ENCODE measurements at regions of chr17 and their contacts with region 1.

Region 1: DNA sequence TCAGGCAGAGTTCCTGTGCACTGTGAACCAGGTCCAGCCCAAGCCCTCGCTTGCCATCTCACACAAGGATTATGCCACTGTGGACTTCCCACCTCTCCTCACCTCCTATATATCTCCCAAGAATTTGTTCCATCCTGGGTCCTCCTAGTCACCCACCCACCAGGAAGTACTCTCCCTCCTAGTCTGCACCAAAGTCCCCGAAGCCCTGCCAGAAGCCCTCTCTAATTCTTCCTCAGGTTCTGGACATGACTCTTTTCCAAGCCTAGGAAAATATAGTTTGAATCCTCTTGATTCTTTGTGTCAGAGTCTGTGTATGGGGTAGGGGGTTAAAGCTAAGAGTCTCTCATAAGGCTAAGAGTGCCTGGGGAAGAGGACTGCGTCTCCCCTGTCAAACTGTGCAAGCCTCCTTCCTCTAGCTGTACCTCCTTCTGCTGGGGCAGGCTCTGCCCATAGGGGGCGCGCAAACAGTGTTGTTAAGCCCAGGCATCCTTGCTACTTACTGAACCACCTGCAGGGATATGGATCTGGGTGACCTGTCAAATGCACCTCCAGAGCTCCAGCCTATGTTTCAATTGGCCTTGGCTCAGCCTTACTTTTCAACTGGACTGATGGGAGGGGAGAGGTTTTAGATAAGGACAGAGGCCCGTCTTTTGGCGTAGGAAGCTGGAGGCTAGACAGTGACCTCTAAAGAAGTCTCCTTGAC is 16.6 kb upstream of the DLX4 start:
- DNase-seq: peak; percentile 92
- ATAC-seq: peak; percentile 97
- H3K4me3 Mint-ChIP-seq: no peak overlapping the region
- H3K27ac Mint-ChIP-seq: no peak overlapping the region
- H3K4me1 Mint-ChIP-seq: no peaks in the 10 kb centered on the region
- H3K27me3 Mint-ChIP-seq: peaks cover 33% of the 10 kb centered on the region

Region 2: DNA sequence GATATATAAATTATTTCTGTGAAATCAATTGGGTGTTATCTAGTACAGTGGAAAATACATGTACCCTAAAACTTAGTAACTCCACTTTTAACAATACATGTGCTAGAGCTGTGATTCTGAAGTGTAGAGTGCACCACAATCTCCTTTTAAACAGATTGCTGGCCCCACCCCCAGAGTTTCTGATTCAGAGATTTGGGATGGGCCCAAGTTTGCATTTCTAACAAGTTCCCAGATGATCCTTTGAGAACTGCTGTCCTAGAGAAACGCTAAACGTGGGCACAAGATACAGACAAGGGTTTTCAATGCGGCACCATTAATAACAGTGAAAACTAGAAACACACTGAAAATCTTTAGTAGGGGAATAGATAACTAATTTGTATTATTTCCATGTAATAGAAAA is 327.5 kb before region 1 on chr17:
- CTCF ChIA-PET with region 1: no interaction called
- POLR2A ChIA-PET with region 1: no interaction called
- intact Hi-C with region 1: no loop called
- DNase-seq: no peak
- ATAC-seq: no peak
- H3K4me3 Mint-ChIP-seq: no peak overlapping the region
- H3K27ac Mint-ChIP-seq: no peak overlapping the region
- H3K4me1 Mint-ChIP-seq: peaks cover 25% of the 10 kb centered on the region
- H3K27me3 Mint-ChIP-seq: no peaks in the 10 kb centered on the region

Region 3: GRCh38 chr17:49841557-49841956 is 110.8 kb before region 1 on chr17:
- CTCF ChIA-PET with region 1: no interaction called
- POLR2A ChIA-PET with region 1: no interaction called
- intact Hi-C with region 1: no loop called
- DNase-seq: no peak
- ATAC-seq: no peak
- H3K4me3 Mint-ChIP-seq: no peak overlapping the region
- H3K27ac Mint-ChIP-seq: no peak overlapping the region
- H3K4me1 Mint-ChIP-seq: peaks cover 11% of the 10 kb centered on the region
- H3K27me3 Mint-ChIP-seq: no peaks in the 10 kb centered on the region

Region 4: DNA sequence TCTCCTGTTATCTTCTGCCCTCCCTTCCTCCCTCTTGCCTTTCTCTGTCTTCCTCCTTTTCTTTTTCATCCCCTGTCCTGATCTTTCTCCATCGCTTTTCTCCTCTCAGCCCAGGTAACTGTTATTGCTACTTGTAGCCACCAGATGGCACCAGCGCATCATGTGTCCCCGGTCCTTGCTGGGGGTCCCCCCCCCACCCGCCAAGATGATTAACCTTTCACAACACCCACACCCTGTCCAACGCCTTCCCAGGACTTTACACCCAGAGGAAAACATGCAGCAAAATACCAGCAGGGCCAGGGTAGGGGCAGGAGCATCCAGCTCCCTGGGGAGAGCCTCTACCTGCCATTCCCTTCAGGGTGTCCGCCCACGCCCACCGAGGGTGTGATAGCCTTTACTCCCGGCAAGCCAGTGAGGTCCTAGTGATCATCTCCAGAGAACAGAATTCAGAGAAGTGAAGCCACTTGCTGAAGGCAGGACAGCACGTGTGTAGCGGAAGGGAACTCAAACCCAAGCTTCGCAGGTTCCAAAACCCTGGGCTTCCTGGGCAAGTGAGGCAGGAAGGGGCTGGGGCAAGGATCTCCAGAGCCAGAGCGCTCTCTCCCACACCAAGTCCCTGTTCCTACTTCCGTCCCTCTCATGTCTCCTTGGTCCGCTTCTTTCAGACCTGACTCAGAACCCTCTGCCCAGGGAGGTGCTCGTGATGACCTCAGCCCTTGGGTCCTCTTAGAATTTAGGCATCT is 91.0 kb before region 1 on chr17:
- CTCF ChIA-PET with region 1: interaction called, 8 read pairs
- POLR2A ChIA-PET with region 1: no interaction called
- intact Hi-C with region 1: loop called in 1 of 2 experiments (anchors 5 kb)
- DNase-seq: peak; percentile 73
- ATAC-seq: peak; percentile 70
- H3K4me3 Mint-ChIP-seq: no peak overlapping the region
- H3K27ac Mint-ChIP-seq: no peak overlapping the region
- H3K4me1 Mint-ChIP-seq: peaks cover 4% of the 10 kb centered on the region
- H3K27me3 Mint-ChIP-seq: peaks cover 7% of the 10 kb centered on the region

Region 5: GRCh38 chr17:49880291-49881053 is 71.9 kb before region 1 on chr17:
- CTCF ChIA-PET with region 1: interaction called, 6 read pairs
- POLR2A ChIA-PET with region 1: no interaction called
- intact Hi-C with region 1: loop called in 1 of 2 experiments (anchors 5 kb)
- DNase-seq: peak; percentile 89
- ATAC-seq: peak; percentile 99
- H3K4me3 Mint-ChIP-seq: no peak overlapping the region
- H3K27ac Mint-ChIP-seq: no peak overlapping the region
- H3K4me1 Mint-ChIP-seq: peaks cover 7% of the 10 kb centered on the region
- H3K27me3 Mint-ChIP-seq: peaks cover 34% of the 10 kb centered on the region

Region 6: DNA sequence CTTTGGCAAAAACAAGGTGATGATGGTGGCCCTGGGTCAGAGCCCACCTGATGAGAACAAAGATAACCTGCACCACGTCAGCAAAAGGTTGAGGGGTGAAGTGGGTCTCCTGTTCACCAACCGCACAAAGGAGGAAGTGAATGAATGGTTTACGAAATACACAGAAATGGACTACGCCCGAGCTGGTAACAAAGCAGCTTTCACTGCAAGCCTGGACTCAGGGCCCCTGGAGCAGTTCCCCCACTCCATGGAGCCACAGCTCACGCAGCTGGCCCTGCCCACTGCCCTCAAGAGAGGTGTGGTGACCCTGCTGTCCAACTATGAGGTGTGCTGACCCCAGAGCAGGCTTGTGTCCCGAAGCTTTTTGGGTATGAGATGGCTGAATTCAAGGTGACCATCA is 13.0 kb before region 1 on chr17:
- CTCF ChIA-PET with region 1: interaction called, 12 read pairs
- POLR2A ChIA-PET with region 1: no interaction called
- intact Hi-C with region 1: no loop called
- DNase-seq: no peak
- ATAC-seq: no peak
- H3K4me3 Mint-ChIP-seq: no peak overlapping the region
- H3K27ac Mint-ChIP-seq: no peak overlapping the region
- H3K4me1 Mint-ChIP-seq: no peaks in the 10 kb centered on the region
- H3K27me3 Mint-ChIP-seq: peaks cover 20% of the 10 kb centered on the region

Region 7: GRCh38 chr17:49968380-49969133 is 16.2 kb after region 1 on chr17:
- CTCF ChIA-PET with region 1: interaction called, 10 read pairs
- POLR2A ChIA-PET with region 1: no interaction called
- intact Hi-C with region 1: no loop called
- DNase-seq: peak; percentile 85
- ATAC-seq: peak; percentile 83
- H3K4me3 Mint-ChIP-seq: peak overlapping the region; percentile 82
- H3K27ac Mint-ChIP-seq: peak overlapping the region; percentile 61
- H3K4me1 Mint-ChIP-seq: peaks cover 34% of the 10 kb centered on the region
- H3K27me3 Mint-ChIP-seq: peaks cover 70% of the 10 kb centered on the region

Region 8: GRCh38 chr17:49980703-49981197 is 28.4 kb after region 1 on chr17:
- CTCF ChIA-PET with region 1: interaction called, 19 read pairs
- POLR2A ChIA-PET with region 1: interaction called, 3 read pairs
- intact Hi-C with region 1: no loop called
- DNase-seq: no peak
- ATAC-seq: no peak
- H3K4me3 Mint-ChIP-seq: no peak overlapping the region
- H3K27ac Mint-ChIP-seq: no peak overlapping the region
- H3K4me1 Mint-ChIP-seq: no peaks in the 10 kb centered on the region
- H3K27me3 Mint-ChIP-seq: peaks cover 19% of the 10 kb centered on the region

Region 9: GRCh38 chr17:50087246-50087911 is 135.0 kb after region 1 on chr17:
- CTCF ChIA-PET with region 1: interaction called, 4 read pairs
- POLR2A ChIA-PET with region 1: no interaction called
- intact Hi-C with region 1: loop called in 1 of 2 experiments (anchors 5 kb)
- DNase-seq: peak; percentile 87
- ATAC-seq: peak; percentile 88
- H3K4me3 Mint-ChIP-seq: no peak overlapping the region
- H3K27ac Mint-ChIP-seq: no peak overlapping the region
- H3K4me1 Mint-ChIP-seq: no peaks in the 10 kb centered on the region
- H3K27me3 Mint-ChIP-seq: no peaks in the 10 kb centered on the region

Region 10: GRCh38 chr17:50148226-50149090 is 196.1 kb after region 1 on chr17:
- CTCF ChIA-PET with region 1: no interaction called
- POLR2A ChIA-PET with region 1: no interaction called
- intact Hi-C with region 1: no loop called
- DNase-seq: peak; percentile 91
- ATAC-seq: peak; percentile 28
- H3K4me3 Mint-ChIP-seq: peak overlapping the region; percentile 90
- H3K27ac Mint-ChIP-seq: peak overlapping the region; percentile 93
- H3K4me1 Mint-ChIP-seq: peaks cover 52% of the 10 kb centered on the region
- H3K27me3 Mint-ChIP-seq: no peaks in the 10 kb centered on the region

Region 11: DNA sequence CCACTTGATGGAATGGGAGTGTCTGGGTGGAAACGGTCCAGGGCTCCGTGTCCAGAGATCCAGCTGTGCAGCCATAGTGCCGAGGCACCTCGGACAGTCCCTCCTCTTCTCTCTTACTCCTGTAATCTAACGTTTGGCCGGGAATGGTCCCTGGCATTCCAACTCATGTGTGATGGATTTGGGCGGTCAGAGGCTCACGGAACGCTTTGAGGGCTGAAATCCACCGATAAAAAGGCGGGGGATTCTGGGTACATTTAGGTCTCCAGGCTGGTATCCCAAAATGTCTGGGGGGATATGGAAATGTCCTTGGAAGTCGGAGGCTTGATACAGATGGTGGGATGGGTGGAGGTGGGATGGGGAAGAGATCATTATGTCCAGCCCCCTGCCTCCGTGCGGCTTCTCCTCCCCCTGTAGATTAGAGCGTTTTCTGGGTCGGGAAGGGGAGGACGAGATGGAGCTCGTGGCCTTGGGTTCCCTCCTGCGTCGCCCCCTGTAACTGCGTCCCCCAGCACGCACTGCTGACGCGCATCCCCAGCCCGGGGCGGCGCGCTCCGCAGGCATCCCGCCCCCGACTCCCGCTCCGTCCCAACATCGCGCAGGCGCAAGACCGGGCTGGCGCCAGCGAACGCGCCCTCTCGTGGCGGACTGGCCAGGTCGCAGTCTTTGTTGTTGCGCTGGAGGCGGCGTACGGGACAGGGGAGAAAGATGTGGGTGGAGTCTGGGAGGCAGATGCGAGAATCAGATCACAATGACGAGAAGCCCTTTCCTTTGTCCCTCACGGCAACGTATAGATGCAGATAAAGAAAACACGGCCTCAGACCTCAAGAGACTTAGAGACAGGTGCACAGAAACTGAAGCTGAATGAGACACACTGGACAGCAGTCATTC is 208.9 kb after region 1 on chr17:
- CTCF ChIA-PET with region 1: no interaction called
- POLR2A ChIA-PET with region 1: no interaction called
- intact Hi-C with region 1: no loop called
- DNase-seq: peak; percentile 98
- ATAC-seq: peak; percentile 96
- H3K4me3 Mint-ChIP-seq: peak overlapping the region; percentile 78
- H3K27ac Mint-ChIP-seq: peak overlapping the region; percentile 99
- H3K4me1 Mint-ChIP-seq: peaks cover 42% of the 10 kb centered on the region
- H3K27me3 Mint-ChIP-seq: no peaks in the 10 kb centered on the region